ENCODE measurements at regions of chr14 and their contacts with region 1.

Region 1: GRCh38 chr14:50311975-50312733 is at the starts of genes DMAC2L and L2HGDH:
- DNase-seq: peak; percentile 91
- ATAC-seq: peak; percentile 94
- H3K4me3 Mint-ChIP-seq: peak within 1 kb of the TSS; percentile 93
- H3K27ac Mint-ChIP-seq: peak within 1 kb of the TSS; percentile 98
- H3K4me1 Mint-ChIP-seq: peaks cover 34% of the 10 kb centered on the region
- H3K27me3 Mint-ChIP-seq: no peaks in the 10 kb centered on the region
- CTCF ChIP-seq: no peak
- total RNA-seq, gene DMAC2L: 31.2 and 32.2 TPM in 2 replicates
- total RNA-seq, gene L2HGDH: 4.3 and 5.2 TPM in 2 replicates

Region 2: GRCh38 chr14:48575772-48576171 is 1736.4 kb before region 1 on chr14:
- CTCF ChIA-PET with region 1: no interaction called
- POLR2A ChIA-PET with region 1: no interaction called
- intact Hi-C with region 1: no loop called
- DNase-seq: no peak
- ATAC-seq: no peak
- H3K4me3 Mint-ChIP-seq: no peak overlapping the region
- H3K27ac Mint-ChIP-seq: no peak overlapping the region
- H3K4me1 Mint-ChIP-seq: no peaks in the 10 kb centered on the region
- H3K27me3 Mint-ChIP-seq: no peaks in the 10 kb centered on the region
- CTCF ChIP-seq: no peak

Region 3: GRCh38 chr14:49585803-49586672 is 726.1 kb before region 1 on chr14 and contains the start of gene RPS29:
- CTCF ChIA-PET with region 1: no interaction called
- POLR2A ChIA-PET with region 1: interaction called, 6 read pairs
- intact Hi-C with region 1: loop called (anchors 2 kb)
- DNase-seq: peak; percentile 94
- ATAC-seq: peak; percentile 82
- H3K4me3 Mint-ChIP-seq: peak within 1 kb of the TSS; percentile 98
- H3K27ac Mint-ChIP-seq: peak within 1 kb of the TSS; percentile 99
- H3K4me1 Mint-ChIP-seq: peaks cover 53% of the 10 kb centered on the region
- H3K27me3 Mint-ChIP-seq: no peaks in the 10 kb centered on the region
- CTCF ChIP-seq: no peak
- total RNA-seq, gene RPS29: 3,259 and 3,732 TPM in 2 replicates

Region 4: DNA sequence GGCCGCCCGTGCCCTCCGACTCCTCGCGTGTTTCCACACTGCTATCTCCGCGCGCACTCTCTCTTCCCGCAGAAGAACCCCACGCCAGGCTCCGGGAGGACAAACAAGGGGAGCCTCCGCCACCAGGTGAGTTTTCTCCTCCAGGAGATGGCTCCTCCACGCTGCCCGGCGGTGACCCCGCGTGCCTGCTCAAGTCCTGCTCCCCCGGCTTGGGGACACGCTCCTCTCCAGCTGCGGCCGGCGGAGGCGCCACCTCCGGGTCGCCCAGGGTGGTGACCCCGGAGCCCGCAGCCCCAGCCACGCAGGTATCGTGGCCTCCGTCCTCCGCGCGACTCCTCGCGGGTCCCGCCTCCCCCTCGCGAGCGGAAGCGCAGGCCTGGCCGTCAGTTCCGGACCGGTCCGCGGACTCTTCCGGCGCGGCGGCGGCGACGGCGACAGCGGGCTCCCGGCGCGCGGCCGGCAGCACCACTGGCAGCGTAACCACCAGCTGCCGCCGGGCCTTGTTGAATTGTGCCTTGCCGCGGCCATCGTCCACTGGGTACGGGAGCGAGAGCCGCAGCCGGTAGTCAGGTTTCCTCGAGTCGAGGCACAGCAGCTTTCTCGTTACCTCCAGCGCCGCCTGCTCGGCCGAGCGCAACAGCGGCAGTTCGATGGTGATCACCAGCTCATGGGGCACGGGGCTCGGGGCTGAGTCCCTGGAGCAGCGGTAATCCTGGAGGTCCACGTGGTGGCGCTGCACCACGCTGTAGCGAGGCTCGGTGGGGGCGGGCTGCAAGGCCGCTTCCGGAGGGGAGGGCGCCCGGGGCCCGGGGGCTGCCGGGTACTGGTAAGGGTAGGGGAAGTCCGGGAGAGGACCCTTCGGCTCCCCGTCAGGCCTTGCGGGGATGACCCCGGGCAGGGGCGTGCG is 678.3 kb before region 1 on chr14:
- CTCF ChIA-PET with region 1: no interaction called
- POLR2A ChIA-PET with region 1: no interaction called
- intact Hi-C with region 1: loop called (anchors 1 kb)
- DNase-seq: peak; percentile 92
- ATAC-seq: peak; percentile 80
- H3K4me3 Mint-ChIP-seq: peak overlapping the region; percentile 96
- H3K27ac Mint-ChIP-seq: peak overlapping the region; percentile 98
- H3K4me1 Mint-ChIP-seq: peaks cover 66% of the 10 kb centered on the region
- H3K27me3 Mint-ChIP-seq: no peaks in the 10 kb centered on the region
- CTCF ChIP-seq: no peak

Region 5: GRCh38 chr14:50116181-50116956 is 195.8 kb before region 1 on chr14 and contains the start of gene VCPKMT:
- CTCF ChIA-PET with region 1: no interaction called
- POLR2A ChIA-PET with region 1: interaction called, 6 read pairs
- intact Hi-C with region 1: loop called (anchors 1 kb)
- DNase-seq: peak; percentile 97
- ATAC-seq: peak; percentile 96
- H3K4me3 Mint-ChIP-seq: peak within 1 kb of the TSS; percentile 95
- H3K27ac Mint-ChIP-seq: peak within 1 kb of the TSS; percentile 97
- H3K4me1 Mint-ChIP-seq: peaks cover 51% of the 10 kb centered on the region
- H3K27me3 Mint-ChIP-seq: no peaks in the 10 kb centered on the region
- CTCF ChIP-seq: no peak
- total RNA-seq, gene VCPKMT: 19.9 and 20.8 TPM in 2 replicates

Region 6: GRCh38 chr14:50342221-50343078 is 30.3 kb after region 1 on chr14:
- CTCF ChIA-PET with region 1: interaction called, 3 read pairs
- POLR2A ChIA-PET with region 1: interaction called, 11 read pairs
- intact Hi-C with region 1: no loop called
- DNase-seq: no peak
- ATAC-seq: peak; percentile 36
- H3K4me3 Mint-ChIP-seq: no peak overlapping the region
- H3K27ac Mint-ChIP-seq: peak overlapping the region; percentile 19
- H3K4me1 Mint-ChIP-seq: peaks cover 21% of the 10 kb centered on the region
- H3K27me3 Mint-ChIP-seq: no peaks in the 10 kb centered on the region
- CTCF ChIP-seq: no peak

Region 7: DNA sequence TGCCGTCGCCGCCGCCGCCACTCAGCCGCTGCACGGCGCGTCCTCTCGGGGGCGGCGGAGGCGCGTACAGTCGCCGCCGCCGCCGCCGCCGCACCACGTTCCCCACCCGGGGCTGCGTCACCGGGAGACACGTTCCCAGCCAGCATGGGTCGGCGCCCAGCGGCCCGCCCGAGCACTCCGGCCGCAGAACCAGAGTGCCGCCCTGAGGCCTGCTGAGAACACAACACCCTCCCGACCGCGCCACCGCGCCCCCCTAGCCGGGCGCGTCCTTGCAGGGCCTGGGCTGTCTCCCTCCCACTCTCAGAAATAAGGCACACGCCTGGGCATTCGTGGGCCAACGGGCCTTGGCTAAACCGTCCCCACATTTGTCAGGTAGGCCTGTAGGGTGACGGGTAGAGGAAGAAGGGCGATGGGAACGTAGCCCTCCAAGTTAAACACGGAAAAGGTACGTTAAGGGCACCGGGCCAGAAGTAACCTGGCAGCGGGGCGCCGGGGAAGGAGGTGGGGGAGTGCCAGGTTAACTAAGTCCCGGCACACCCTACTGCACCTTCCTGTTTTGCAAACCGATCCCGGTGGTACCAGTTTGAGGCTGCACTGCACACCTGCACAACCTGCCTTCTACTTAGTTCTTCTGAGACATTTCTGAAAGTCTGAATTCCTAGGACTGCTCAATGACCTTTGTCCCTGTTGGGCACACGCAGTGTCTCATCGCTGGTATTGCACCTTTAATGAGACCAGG is 220.5 kb after region 1 on chr14 and contains the start of gene MAP4K5:
- CTCF ChIA-PET with region 1: interaction called, 7 read pairs
- POLR2A ChIA-PET with region 1: interaction called, 16 read pairs
- intact Hi-C with region 1: loop called (anchors 2 kb)
- DNase-seq: peak; percentile 83
- ATAC-seq: peak; percentile 94
- H3K4me3 Mint-ChIP-seq: peak within 1 kb of the TSS; percentile 84
- H3K27ac Mint-ChIP-seq: peak within 1 kb of the TSS; percentile 88
- H3K4me1 Mint-ChIP-seq: peaks cover 47% of the 10 kb centered on the region
- H3K27me3 Mint-ChIP-seq: no peaks in the 10 kb centered on the region
- CTCF ChIP-seq: no peak
- total RNA-seq, gene MAP4K5: 32.5 and 34.1 TPM in 2 replicates

Region 8: GRCh38 chr14:51593397-51593796 is 1281.2 kb after region 1 on chr14:
- CTCF ChIA-PET with region 1: no interaction called
- POLR2A ChIA-PET with region 1: no interaction called
- intact Hi-C with region 1: no loop called
- DNase-seq: no peak
- ATAC-seq: no peak
- H3K4me3 Mint-ChIP-seq: no peak overlapping the region
- H3K27ac Mint-ChIP-seq: no peak overlapping the region
- H3K4me1 Mint-ChIP-seq: no peaks in the 10 kb centered on the region
- H3K27me3 Mint-ChIP-seq: peaks cover 5% of the 10 kb centered on the region
- CTCF ChIP-seq: no peak

Measured in activated B cell treated with CpG ODN at 0.5 μM for 24 hours (primary cell).